ENCODE measurements at regions of chr6 and their contacts with region 1.

Region 1: GRCh38 chr6:131923356-131923755 is 27.8 kb downstream of the CCN2 start:
- H3K4me3 ChIP-seq: no peak overlapping the region
- H3K27ac ChIP-seq: no peak overlapping the region
- H3K4me1 ChIP-seq: no peaks in the 10 kb centered on the region
- CTCF ChIP-seq: no peak

Region 2: GRCh38 chr6:131819572-131820124 is 103.7 kb before region 1 on chr6:
- CTCF ChIA-PET with region 1: no interaction called
- POLR2A ChIA-PET with region 1: no interaction called
- H3K4me3 ChIP-seq: no peak overlapping the region
- H3K27ac ChIP-seq: no peak overlapping the region
- H3K4me1 ChIP-seq: peaks cover 25% of the 10 kb centered on the region
- CTCF ChIP-seq: no peak

Region 3: GRCh38 chr6:131909408-131910218 is 13.7 kb before region 1 on chr6:
- CTCF ChIA-PET with region 1: interaction called, 86 read pairs
- POLR2A ChIA-PET with region 1: no interaction called
- H3K4me3 ChIP-seq: no peak overlapping the region
- H3K27ac ChIP-seq: no peak overlapping the region
- H3K4me1 ChIP-seq: no peaks in the 10 kb centered on the region
- CTCF ChIP-seq: peak; percentile 26; the same call in 1 of the 2 replicates

Region 4: GRCh38 chr6:132140189-132140588 is 216.8 kb after region 1 on chr6:
- CTCF ChIA-PET with region 1: interaction called, 13 read pairs
- POLR2A ChIA-PET with region 1: no interaction called
- H3K4me3 ChIP-seq: no peak overlapping the region
- H3K27ac ChIP-seq: no peak overlapping the region
- H3K4me1 ChIP-seq: no peaks in the 10 kb centered on the region
- CTCF ChIP-seq: no peak

Region 5: GRCh38 chr6:132209351-132209750 is 286.0 kb after region 1 on chr6:
- CTCF ChIA-PET with region 1: interaction called, 12 read pairs
- POLR2A ChIA-PET with region 1: no interaction called
- H3K4me3 ChIP-seq: no peak overlapping the region
- H3K27ac ChIP-seq: no peak overlapping the region
- H3K4me1 ChIP-seq: no peaks in the 10 kb centered on the region
- CTCF ChIP-seq: no peak

Region 6: GRCh38 chr6:132259070-132259469 is 335.7 kb after region 1 on chr6:
- CTCF ChIA-PET with region 1: interaction called, 163 read pairs
- POLR2A ChIA-PET with region 1: no interaction called
- H3K4me3 ChIP-seq: no peak overlapping the region
- H3K27ac ChIP-seq: no peak overlapping the region
- H3K4me1 ChIP-seq: no peaks in the 10 kb centered on the region
- CTCF ChIP-seq: peak; percentile 33; the same call in 1 of the 2 replicates

Region 7: DNA sequence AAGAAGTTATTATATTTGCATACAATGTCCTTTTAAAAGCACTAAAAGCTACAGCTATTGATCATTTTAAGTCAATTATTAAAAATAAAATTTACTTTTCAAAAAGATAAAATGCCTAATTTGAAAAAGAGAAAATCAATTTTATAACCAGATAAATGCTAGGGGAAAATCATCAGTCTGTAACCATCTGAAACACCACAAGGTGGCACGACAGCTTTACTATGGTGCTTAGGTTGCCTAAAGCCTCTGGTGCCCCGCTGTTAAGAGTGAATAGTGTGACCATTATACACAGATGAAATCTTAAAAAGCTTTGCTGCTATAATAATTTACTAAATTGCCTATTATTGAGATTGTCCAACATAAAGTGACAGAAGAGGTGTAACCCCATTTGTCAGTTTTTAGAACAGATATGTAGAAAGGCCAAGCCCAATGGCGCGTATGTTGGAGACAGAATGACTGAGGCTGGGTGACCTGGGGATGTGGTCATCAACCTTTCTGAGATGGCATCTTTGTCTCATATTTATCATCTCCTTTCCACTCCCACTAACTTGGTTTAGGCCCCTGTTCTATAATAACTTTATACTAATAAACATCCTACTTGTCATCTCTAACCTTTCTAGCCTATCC is 377.1 kb after region 1 on chr6:
- CTCF ChIA-PET with region 1: interaction called, 50 read pairs
- POLR2A ChIA-PET with region 1: no interaction called
- H3K4me3 ChIP-seq: no peak overlapping the region
- H3K27ac ChIP-seq: no peak overlapping the region
- H3K4me1 ChIP-seq: no peaks in the 10 kb centered on the region
- CTCF ChIP-seq: no peak

Region 8: GRCh38 chr6:132490024-132490423 is 566.7 kb after region 1 on chr6:
- CTCF ChIA-PET with region 1: interaction called, 12 read pairs
- POLR2A ChIA-PET with region 1: no interaction called
- H3K4me3 ChIP-seq: no peak overlapping the region
- H3K27ac ChIP-seq: no peak overlapping the region
- H3K4me1 ChIP-seq: no peaks in the 10 kb centered on the region
- CTCF ChIP-seq: no peak